ENCODE measurements at regions of chr9 and their contacts with region 1.

Region 1: GRCh38 chr9:100352727-100353505 is at the start of gene TEX10:
- DNase-seq: peak; percentile 77 to 83
- ATAC-seq: peak; percentile 93 to 97
- H3K4me3 ChIP-seq: peak within 1 kb of the TSS; percentile 80 to 95 (median 84)
- H3K27ac ChIP-seq: peak within 1 kb of the TSS; percentile 77 to 90 (median 86)
- H3K4me1 ChIP-seq: peaks cover 13 to 17% of the 10 kb centered on the region in 2 donors
- H3K27me3 ChIP-seq: no peaks in the 10 kb centered on the region
- CTCF ChIP-seq: peak in 2 of 5 experiments; percentile 9 to 20
- POLR2A ChIP-seq: peak; percentile 66 to 71
- total RNA-seq, gene TEX10: 16.0 to 20.5 (median 18.4) TPM

Region 2: DNA sequence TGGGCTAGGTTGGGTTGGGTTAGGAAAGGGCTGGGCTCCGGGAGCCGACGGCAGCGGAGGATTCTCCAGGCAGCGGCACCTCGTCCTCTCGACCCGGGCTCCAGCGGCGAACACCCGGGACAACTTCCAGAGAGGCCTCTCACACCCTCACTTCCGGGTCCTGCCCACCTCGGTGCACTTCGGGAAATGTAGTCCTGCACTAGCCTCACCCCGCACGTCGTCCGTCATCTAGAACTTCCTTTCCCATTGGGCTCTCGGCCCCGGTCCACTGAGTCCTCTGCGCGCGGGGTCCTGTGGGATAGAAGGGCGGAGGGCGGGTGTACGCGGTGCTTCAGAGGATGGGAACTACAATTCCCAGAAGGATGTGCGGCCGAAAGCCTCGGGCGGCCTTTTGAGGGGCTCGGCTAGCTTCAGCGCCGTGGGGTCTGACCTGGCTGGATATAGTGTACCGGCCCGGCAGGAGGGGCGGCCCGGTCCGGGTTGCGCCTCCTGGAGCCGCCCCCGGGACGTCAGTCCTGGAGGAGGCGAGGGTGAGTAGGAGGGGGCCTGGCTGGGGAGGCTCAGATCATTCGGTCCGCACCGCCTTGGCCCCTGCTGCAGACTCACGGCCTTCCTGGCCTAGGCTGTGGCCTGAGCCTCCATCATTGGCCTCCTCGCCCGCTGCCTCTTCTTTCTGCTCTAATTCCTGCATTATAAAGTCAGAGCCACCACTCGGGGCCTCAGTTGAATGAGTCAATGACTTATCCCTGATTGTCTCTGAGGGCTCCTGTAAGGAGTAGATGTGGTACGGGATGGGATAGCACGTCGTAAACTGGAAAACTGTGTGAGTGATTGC is 253.8 kb before region 1 on chr9 and contains the starts of genes ERP44 and INVS:
- in situ Hi-C with region 1: no loop called
- intact Hi-C with region 1: loop called (anchors 5 kb)
- DNase-seq: peak; percentile 99 to 100
- ATAC-seq: peak; percentile 95
- H3K4me3 ChIP-seq: peak within 1 kb of the TSS; percentile 87 to 98 (median 98)
- H3K27ac ChIP-seq: peak within 1 kb of the TSS; percentile 90 to 99 (median 95)
- H3K4me1 ChIP-seq: peaks cover 31 to 38% of the 10 kb centered on the region in 2 donors
- H3K27me3 ChIP-seq: no peaks in the 10 kb centered on the region
- CTCF ChIP-seq: no peak
- POLR2A ChIP-seq: peak; percentile 92 to 94
- total RNA-seq, gene ERP44: 7.0 to 10.8 (median 9.7) TPM
- total RNA-seq, gene INVS: 5.5 to 13.9 (median 6.7) TPM

Region 3: GRCh38 chr9:100486479-100487176 is 133.7 kb after region 1 on chr9:
- in situ Hi-C with region 1: no loop called
- intact Hi-C with region 1: loop called (anchors 10 kb)
- DNase-seq: no peak
- ATAC-seq: no peak
- H3K4me3 ChIP-seq: no peak overlapping the region
- H3K27ac ChIP-seq: no peak overlapping the region
- H3K4me1 ChIP-seq: no peaks in the 10 kb centered on the region
- H3K27me3 ChIP-seq: no peaks in the 10 kb centered on the region
- CTCF ChIP-seq: peak in 1 of 5 experiments; percentile 23
- POLR2A ChIP-seq: no peak

Region 4: GRCh38 chr9:100575765-100576386 is 223.0 kb after region 1 on chr9:
- in situ Hi-C with region 1: no loop called
- intact Hi-C with region 1: loop called (anchors 5 kb)
- DNase-seq: no peak
- ATAC-seq: no peak
- H3K4me3 ChIP-seq: no peak overlapping the region
- H3K27ac ChIP-seq: peak overlapping the region; percentile 80 to 94 (median 88)
- H3K4me1 ChIP-seq: peaks cover 22 to 25% of the 10 kb centered on the region in 2 donors
- H3K27me3 ChIP-seq: no peaks in the 10 kb centered on the region
- CTCF ChIP-seq: no peak
- POLR2A ChIP-seq: no peak

Measured in gastrocnemius medialis (tissue), 4 donors.